Panc1 (cell line): ENCODE measurements at regions of chr17 and their contacts with region 1.

Region 1: DNA sequence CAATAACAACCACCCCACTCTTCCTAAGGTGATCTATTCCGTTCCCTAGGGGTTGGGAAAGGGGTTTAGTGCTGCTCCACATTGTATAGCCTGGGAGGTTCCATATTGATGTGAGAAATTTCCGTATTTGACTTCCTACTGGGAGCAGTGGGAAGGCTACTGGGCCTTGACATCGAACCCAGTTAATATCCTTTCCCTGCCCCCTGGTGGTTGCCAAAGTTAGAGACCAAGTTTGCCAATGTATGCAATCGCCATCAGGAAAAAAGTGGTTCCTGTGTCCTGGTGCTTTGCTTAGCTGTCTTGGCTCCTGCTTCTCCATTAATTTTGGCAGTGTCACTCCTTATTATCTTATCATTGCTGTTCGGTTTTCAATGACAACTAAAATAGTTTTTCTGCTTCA is 914.9 kb downstream of the KCNJ2 start:
- DNase-seq: no peak
- ATAC-seq: peak; percentile 60
- H3K4me3 ChIP-seq: no peak overlapping the region
- H3K27ac ChIP-seq: no peak overlapping the region
- H3K4me1 ChIP-seq: no peaks in the 10 kb centered on the region
- H3K27me3 ChIP-seq: no peaks in the 10 kb centered on the region
- CTCF ChIP-seq: peak; percentile 72

Region 2: DNA sequence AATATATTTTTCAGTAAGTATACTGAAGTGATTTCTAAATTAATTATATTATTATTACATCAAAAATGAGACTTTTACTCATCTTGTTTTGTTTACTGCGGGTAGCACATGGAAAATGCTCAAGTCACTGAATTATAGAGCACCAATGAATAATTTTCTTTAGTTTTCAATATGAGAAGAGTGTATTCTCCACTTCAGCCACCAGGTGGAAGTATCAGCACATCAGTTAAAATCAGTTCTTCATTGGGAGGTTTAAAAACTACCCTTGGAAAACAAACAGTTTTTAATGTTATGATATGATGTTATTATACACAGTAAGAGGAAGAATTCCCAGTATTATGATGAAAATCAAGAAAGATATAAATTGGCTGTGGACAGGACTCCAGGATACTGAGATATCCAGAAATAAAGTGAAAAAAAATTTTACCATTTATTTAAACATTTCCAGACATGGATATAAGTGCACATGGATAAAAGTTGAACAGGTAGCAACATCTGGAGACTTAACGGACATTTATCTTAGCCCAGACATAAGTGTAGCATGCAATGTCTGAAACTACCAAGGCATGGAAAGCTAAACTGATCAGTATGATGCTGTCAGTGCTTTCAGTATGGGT is 447.6 kb before region 1 on chr17:
- CTCF ChIA-PET with region 1: no interaction called
- POLR2A ChIA-PET with region 1: no interaction called
- in situ Hi-C with region 1: no loop called
- intact Hi-C with region 1: loop called (anchors 5 kb)
- DNase-seq: peak; percentile 25
- ATAC-seq: no peak
- H3K4me3 ChIP-seq: no peak overlapping the region
- H3K27ac ChIP-seq: no peak overlapping the region
- H3K4me1 ChIP-seq: no peaks in the 10 kb centered on the region
- H3K27me3 ChIP-seq: peaks cover 12% of the 10 kb centered on the region; the same call in 1 of the 2 replicates
- CTCF ChIP-seq: peak; percentile 70; the same call in 1 of the 2 replicates